Activated CD4-positive, alpha-beta memory T cell treated with anti-CD3 and anti-CD28 coated beads for 36 hours (primary cell): ENCODE measurements at regions of chr2 and their contacts with region 1.

Region 1: GRCh38 chr2:105545730-105546627 is 147.1 kb upstream of the FHL2 start:
- DNase-seq: peak; percentile 79
- H3K4me3 Mint-ChIP-seq: no peak overlapping the region
- H3K27ac Mint-ChIP-seq: no peak overlapping the region
- H3K4me1 Mint-ChIP-seq: peaks cover 11% of the 10 kb centered on the region
- H3K27me3 Mint-ChIP-seq: peaks cover 6% of the 10 kb centered on the region

Region 2: GRCh38 chr2:105521205-105521604 is 24.8 kb before region 1 on chr2:
- CTCF ChIA-PET with region 1: interaction called, 7 read pairs
- POLR2A ChIA-PET with region 1: no interaction called
- intact Hi-C with region 1: loop called (anchors 1 kb)
- DNase-seq: no peak
- H3K4me3 Mint-ChIP-seq: no peak overlapping the region
- H3K27ac Mint-ChIP-seq: no peak overlapping the region
- H3K4me1 Mint-ChIP-seq: no peaks in the 10 kb centered on the region
- H3K27me3 Mint-ChIP-seq: peaks cover 3% of the 10 kb centered on the region

Region 3: DNA sequence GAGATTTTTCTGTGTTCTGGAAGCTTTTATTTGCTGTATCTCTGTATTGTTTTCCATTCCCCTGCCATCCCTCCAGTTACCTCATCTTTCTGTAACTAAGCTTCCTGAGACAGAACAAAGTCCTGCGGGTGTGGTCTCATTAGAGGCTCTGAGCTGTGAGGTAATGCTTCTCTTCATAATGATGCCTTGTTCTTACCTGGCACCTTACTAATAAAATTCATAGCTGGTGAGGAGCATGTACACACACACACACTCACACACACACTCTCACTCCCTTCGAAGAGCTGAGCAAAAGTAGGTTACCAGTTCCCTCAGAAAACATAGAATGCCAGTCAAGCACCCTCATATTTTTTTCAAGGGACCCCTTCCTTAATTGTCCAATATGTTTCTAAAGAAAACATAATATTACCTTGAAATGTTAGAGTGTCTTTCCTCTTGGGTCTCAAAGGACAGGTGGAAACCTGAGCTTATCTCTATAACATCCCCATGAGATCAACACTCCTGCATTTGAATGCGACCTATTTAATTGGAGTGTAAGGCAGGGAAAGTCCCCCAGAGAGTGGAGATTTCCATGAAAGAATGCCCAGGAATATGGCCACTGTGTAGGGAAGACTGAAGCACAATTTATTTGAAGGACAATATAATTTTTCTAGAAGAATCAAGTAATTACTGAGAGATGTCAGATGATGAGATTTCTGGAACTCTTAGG is 37.1 kb after region 1 on chr2:
- CTCF ChIA-PET with region 1: no interaction called
- POLR2A ChIA-PET with region 1: no interaction called
- intact Hi-C with region 1: no loop called
- DNase-seq: no peak
- H3K4me3 Mint-ChIP-seq: no peak overlapping the region
- H3K27ac Mint-ChIP-seq: no peak overlapping the region
- H3K4me1 Mint-ChIP-seq: peaks cover 24% of the 10 kb centered on the region
- H3K27me3 Mint-ChIP-seq: no peaks in the 10 kb centered on the region